GM12878 (cell line): ENCODE measurements at regions of chr9 and their contacts with region 1.

Region 1: DNA sequence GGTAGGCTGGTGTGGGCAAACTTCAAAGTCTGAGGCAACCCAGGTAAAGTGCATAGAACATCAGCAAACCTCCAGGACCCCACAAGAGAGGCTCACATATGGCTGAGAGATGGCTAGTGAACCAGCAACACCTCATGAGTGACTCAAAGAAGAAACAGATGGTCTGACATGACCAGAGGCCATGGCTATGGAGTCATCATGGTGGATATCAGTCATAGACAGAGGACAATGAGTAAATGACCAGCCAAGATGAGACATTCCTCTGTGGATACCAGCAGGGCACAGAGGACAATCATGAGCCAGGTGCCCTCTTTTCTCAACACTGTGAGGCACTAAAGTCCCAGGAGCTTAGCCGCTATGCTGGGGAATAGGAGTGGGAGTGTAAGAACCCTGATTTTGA is 180.8 kb downstream of the RASEF start:
- DNase-seq: no peak
- ATAC-seq: no peak
- H3K4me3 ChIP-seq: no peak overlapping the region
- H3K27ac ChIP-seq: no peak overlapping the region
- H3K4me1 ChIP-seq: no peaks in the 10 kb centered on the region
- H3K27me3 ChIP-seq: no peaks in the 10 kb centered on the region
- CTCF ChIP-seq: no peak
- EP300 ChIP-seq: no peak
- POLR2A ChIP-seq: no peak
- RAD21 ChIP-seq: no peak

Region 2: DNA sequence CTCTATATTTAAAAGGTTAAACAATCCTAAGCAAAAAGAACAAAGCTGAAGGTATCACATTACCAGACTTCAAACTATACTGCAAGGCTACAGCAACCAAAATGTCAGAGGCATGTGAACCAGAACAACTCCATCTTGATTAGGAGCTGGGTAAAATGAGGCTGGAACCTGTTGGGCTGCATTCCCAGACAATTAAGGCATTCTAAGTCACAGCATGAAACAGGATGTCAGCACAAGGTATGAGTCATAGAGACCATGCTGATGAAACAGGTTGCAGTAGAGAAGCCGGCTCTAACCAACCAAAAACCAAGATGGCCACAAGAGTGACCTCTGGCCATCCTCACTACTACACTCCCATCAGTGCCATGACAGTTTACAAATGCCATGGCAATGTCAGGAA is 71.2 kb before region 1 on chr9:
- CTCF ChIA-PET with region 1: no interaction called
- POLR2A ChIA-PET with region 1: no interaction called
- RAD21 ChIA-PET with region 1: no interaction called
- SMC1A ChIA-PET with region 1: no interaction called
- in situ Hi-C with region 1: no loop called
- intact Hi-C with region 1: loop called (anchors 10 kb)
- DNase-seq: no peak
- ATAC-seq: no peak
- H3K4me3 ChIP-seq: no peak overlapping the region
- H3K27ac ChIP-seq: no peak overlapping the region
- H3K4me1 ChIP-seq: no peaks in the 10 kb centered on the region
- H3K27me3 ChIP-seq: no peaks in the 10 kb centered on the region
- CTCF ChIP-seq: no peak
- EP300 ChIP-seq: no peak
- POLR2A ChIP-seq: no peak
- RAD21 ChIP-seq: no peak

Region 3: GRCh38 chr9:82829818-82830217 is 52.3 kb before region 1 on chr9:
- CTCF ChIA-PET with region 1: no interaction called
- POLR2A ChIA-PET with region 1: no interaction called
- RAD21 ChIA-PET with region 1: no interaction called
- SMC1A ChIA-PET with region 1: no interaction called
- in situ Hi-C with region 1: loop called (anchors 5 kb)
- intact Hi-C with region 1: no loop called
- DNase-seq: no peak
- ATAC-seq: no peak
- H3K4me3 ChIP-seq: no peak overlapping the region
- H3K27ac ChIP-seq: no peak overlapping the region
- H3K4me1 ChIP-seq: no peaks in the 10 kb centered on the region
- H3K27me3 ChIP-seq: no peaks in the 10 kb centered on the region
- CTCF ChIP-seq: no peak
- EP300 ChIP-seq: no peak
- POLR2A ChIP-seq: no peak
- RAD21 ChIP-seq: no peak